ENCODE measurements at regions of chr20 and their contacts with region 1.

Region 1: GRCh38 chr20:18287915-18288748 is at the start of gene ZNF133:
- DNase-seq: peak; percentile 94 to 100 (median 96)
- ATAC-seq: peak; percentile 91
- H3K4me3 ChIP-seq: peak within 1 kb of the TSS; percentile 74 to 95
- H3K4me3 Mint-ChIP-seq: peak within 1 kb of the TSS; percentile 96
- H3K27ac ChIP-seq: peak within 1 kb of the TSS; percentile 94 to 96
- H3K27ac Mint-ChIP-seq: peak within 1 kb of the TSS; percentile 99
- H3K4me1 ChIP-seq: peaks cover 16% of the 10 kb centered on the region
- H3K4me1 Mint-ChIP-seq: peaks cover 37% of the 10 kb centered on the region
- H3K27me3 ChIP-seq: peaks cover 0 to 2% of the 10 kb centered on the region in 2 experiments
- H3K27me3 Mint-ChIP-seq: peaks cover 14% of the 10 kb centered on the region
- CTCF ChIP-seq: no peak
- total RNA-seq, gene ZNF133: 2.2 to 2.7 TPM

Region 2: GRCh38 chr20:16729565-16730456 is 1558.3 kb before region 1 on chr20 and contains the start of gene SNRPB2:
- CTCF ChIA-PET with region 1: no interaction called
- POLR2A ChIA-PET with region 1: interaction called, 3 read pairs
- intact Hi-C with region 1: loop called (anchors 2 kb)
- DNase-seq: peak; percentile 81 to 96 (median 91)
- ATAC-seq: peak; percentile 95
- H3K4me3 ChIP-seq: peak within 1 kb of the TSS; percentile 84 to 97
- H3K4me3 Mint-ChIP-seq: peak within 1 kb of the TSS; percentile 100
- H3K27ac ChIP-seq: peak within 1 kb of the TSS; percentile 93 to 94
- H3K27ac Mint-ChIP-seq: peak within 1 kb of the TSS; percentile 100
- H3K4me1 ChIP-seq: peaks cover 36% of the 10 kb centered on the region
- H3K4me1 Mint-ChIP-seq: peaks cover 52% of the 10 kb centered on the region
- H3K27me3 ChIP-seq: peaks cover 0 to 12% of the 10 kb centered on the region in 2 experiments
- H3K27me3 Mint-ChIP-seq: peaks cover 15% of the 10 kb centered on the region
- CTCF ChIP-seq: no peak
- total RNA-seq, gene SNRPB2: 49.0 to 50.4 TPM

Region 3: GRCh38 chr20:17682103-17682888 is 605.8 kb before region 1 on chr20 and contains the start of gene RRBP1:
- CTCF ChIA-PET with region 1: no interaction called
- POLR2A ChIA-PET with region 1: no interaction called
- intact Hi-C with region 1: loop called in 1 of 2 experiments (anchors 2 kb)
- DNase-seq: peak; percentile 94 to 98 (median 96)
- ATAC-seq: peak; percentile 91
- H3K4me3 ChIP-seq: peak within 1 kb of the TSS; percentile 50 to 71
- H3K4me3 Mint-ChIP-seq: peak within 1 kb of the TSS; percentile 88
- H3K27ac ChIP-seq: peak within 1 kb of the TSS; percentile 40 to 69
- H3K27ac Mint-ChIP-seq: peak within 1 kb of the TSS; percentile 86
- H3K4me1 ChIP-seq: peaks cover 18% of the 10 kb centered on the region
- H3K4me1 Mint-ChIP-seq: peaks cover 19% of the 10 kb centered on the region
- H3K27me3 ChIP-seq: no peaks in the 10 kb centered on the region
- H3K27me3 Mint-ChIP-seq: peaks cover 25% of the 10 kb centered on the region
- CTCF ChIP-seq: peak; percentile 83
- total RNA-seq, gene RRBP1: 26.4 to 26.5 TPM

Region 4: DNA sequence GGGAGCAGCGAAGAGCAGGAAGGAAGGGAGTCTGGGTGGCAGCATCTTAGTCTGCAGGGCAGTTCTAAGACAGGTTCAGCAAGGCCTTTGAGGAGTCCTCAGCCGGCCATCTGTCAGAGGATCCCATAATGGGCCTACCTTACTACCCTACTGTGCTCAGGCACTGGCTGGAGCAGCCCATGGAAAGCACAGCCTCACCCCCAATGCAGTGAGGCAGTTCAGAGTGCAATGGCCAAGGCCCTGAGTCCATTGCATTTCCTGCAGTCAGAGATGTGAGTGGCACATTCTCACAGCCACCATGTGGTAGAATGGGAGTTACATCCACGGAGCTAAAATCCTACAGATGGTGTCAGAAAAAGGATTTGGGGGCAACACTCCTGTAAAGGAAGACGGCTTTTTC is 211.0 kb before region 1 on chr20:
- CTCF ChIA-PET with region 1: no interaction called
- POLR2A ChIA-PET with region 1: no interaction called
- intact Hi-C with region 1: no loop called
- DNase-seq: no peak
- ATAC-seq: no peak
- H3K4me3 ChIP-seq: no peak overlapping the region
- H3K4me3 Mint-ChIP-seq: no peak overlapping the region
- H3K27ac ChIP-seq: no peak overlapping the region
- H3K27ac Mint-ChIP-seq: no peak overlapping the region
- H3K4me1 ChIP-seq: no peaks in the 10 kb centered on the region
- H3K4me1 Mint-ChIP-seq: no peaks in the 10 kb centered on the region
- H3K27me3 ChIP-seq: no peaks in the 10 kb centered on the region
- H3K27me3 Mint-ChIP-seq: peaks cover 22% of the 10 kb centered on the region
- CTCF ChIP-seq: no peak

Region 5: DNA sequence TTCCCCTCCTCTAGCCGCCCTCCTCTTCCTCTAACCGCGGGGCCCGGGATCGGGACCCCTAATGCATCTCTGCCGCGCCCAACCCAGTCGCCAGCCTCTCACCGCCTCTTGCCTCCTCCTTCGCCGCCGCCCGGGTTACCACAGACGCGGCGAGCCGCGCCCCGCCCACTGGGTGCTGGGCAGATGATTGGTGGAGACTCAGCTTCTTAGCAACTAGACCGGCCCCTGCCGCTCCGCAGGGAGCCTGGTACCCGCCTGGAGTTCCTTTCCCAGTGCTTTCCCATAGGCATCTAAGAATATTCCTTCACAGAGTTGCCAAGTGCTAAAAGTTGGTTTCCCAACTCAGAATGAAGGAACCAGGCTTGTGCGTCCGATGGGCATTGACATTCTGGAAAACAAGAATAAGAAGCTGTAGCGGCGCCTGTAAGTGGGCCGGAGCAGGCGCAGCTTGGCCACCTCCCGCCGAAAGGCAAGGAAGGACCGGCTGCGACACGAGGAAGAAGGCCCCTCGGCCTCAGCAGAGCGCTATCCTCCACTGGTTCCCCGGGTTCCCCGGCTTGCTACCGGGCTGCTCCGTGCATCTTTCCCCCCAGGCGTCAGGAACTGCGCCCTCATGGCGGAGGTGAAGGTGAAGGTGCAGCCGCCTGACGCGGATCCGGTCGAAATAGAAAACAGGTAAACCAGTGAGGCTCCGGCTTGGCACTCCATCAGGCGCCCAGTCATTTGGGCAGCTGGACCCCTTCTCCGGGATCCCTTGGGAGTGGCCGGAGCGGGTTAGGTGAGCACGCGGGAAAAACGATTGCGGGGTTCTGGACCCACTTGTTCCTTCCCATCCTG is 179.0 kb after region 1 on chr20 and contains the starts of genes DZANK1 and POLR3F:
- CTCF ChIA-PET with region 1: no interaction called
- POLR2A ChIA-PET with region 1: interaction called, 8 read pairs
- intact Hi-C with region 1: loop called in 1 of 2 experiments (anchors 1 kb)
- DNase-seq: peak; percentile 84 to 95 (median 93)
- ATAC-seq: peak; percentile 90
- H3K4me3 ChIP-seq: peak within 1 kb of the TSS; percentile 79 to 93
- H3K4me3 Mint-ChIP-seq: peak within 1 kb of the TSS; percentile 97
- H3K27ac ChIP-seq: peak within 1 kb of the TSS; percentile 73 to 92
- H3K27ac Mint-ChIP-seq: peak within 1 kb of the TSS; percentile 97
- H3K4me1 ChIP-seq: peaks cover 16% of the 10 kb centered on the region
- H3K4me1 Mint-ChIP-seq: peaks cover 24% of the 10 kb centered on the region
- H3K27me3 ChIP-seq: no peaks in the 10 kb centered on the region
- H3K27me3 Mint-ChIP-seq: no peaks in the 10 kb centered on the region
- CTCF ChIP-seq: no peak
- total RNA-seq, gene DZANK1: 2.0 to 2.3 TPM
- total RNA-seq, gene POLR3F: 11.5 TPM

Region 6: DNA sequence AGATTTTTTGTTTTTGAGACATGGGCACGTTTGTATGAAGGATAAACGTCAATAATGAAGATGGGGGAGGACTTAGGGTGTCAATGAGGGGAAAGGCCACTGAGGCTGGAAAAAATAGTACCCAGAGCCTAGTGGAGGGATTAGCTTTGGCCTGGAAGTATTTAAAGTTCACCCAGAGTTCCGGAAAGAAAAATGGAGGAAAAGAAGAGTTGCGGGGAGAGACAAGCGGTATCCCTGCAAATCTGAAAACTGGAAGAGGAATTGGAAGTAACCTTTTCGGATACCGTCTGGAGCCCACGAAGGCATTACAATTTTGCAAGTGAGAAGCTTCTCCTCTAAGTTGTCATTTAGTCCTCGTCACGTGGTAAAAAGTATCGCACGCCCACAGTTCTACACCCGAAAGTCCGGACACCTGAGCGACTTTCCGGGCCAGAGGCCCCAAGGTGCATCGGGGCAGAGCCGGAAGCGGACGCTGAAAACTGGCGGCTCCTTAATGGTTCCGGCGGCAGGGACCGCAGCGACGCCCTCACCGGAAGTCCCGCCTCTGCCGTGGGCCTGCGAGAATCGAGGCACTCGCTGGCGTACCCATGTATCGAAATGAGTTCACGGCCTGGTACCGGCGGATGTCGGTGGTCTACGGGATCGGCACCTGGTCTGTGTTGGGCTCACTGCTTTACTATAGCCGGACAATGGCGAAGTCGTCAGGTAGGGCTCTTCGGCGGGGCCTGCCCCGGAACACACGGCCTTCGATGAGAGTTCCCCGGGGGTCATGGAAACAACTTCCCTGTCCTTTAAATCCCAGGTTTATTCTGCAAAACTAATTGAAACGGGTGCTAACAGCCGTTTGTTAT is 279.0 kb after region 1 on chr20 and contains the start of gene SMIM26:
- CTCF ChIA-PET with region 1: no interaction called
- POLR2A ChIA-PET with region 1: no interaction called
- intact Hi-C with region 1: loop called in 1 of 2 experiments (anchors 1 kb)
- DNase-seq: peak; percentile 88 to 97 (median 95)
- ATAC-seq: peak; percentile 98
- H3K4me3 ChIP-seq: peak within 1 kb of the TSS; percentile 54 to 90
- H3K4me3 Mint-ChIP-seq: peak within 1 kb of the TSS; percentile 96
- H3K27ac ChIP-seq: peak within 1 kb of the TSS; percentile 79 to 94
- H3K27ac Mint-ChIP-seq: peak within 1 kb of the TSS; percentile 99
- H3K4me1 ChIP-seq: peaks cover 14% of the 10 kb centered on the region
- H3K4me1 Mint-ChIP-seq: peaks cover 22% of the 10 kb centered on the region
- H3K27me3 ChIP-seq: no peaks in the 10 kb centered on the region
- H3K27me3 Mint-ChIP-seq: no peaks in the 10 kb centered on the region
- CTCF ChIP-seq: no peak
- total RNA-seq, gene SMIM26: 63.9 to 64.8 TPM

Region 7: GRCh38 chr20:20017001-20017843 is 1729.1 kb after region 1 on chr20 and contains the start of gene NAA20:
- CTCF ChIA-PET with region 1: no interaction called
- POLR2A ChIA-PET with region 1: no interaction called
- intact Hi-C with region 1: loop called in 1 of 2 experiments (anchors 10 kb)
- DNase-seq: peak; percentile 75 to 94 (median 91)
- ATAC-seq: peak; percentile 94
- H3K4me3 ChIP-seq: peak within 1 kb of the TSS; percentile 77 to 89
- H3K4me3 Mint-ChIP-seq: peak within 1 kb of the TSS; percentile 91
- H3K27ac ChIP-seq: peak within 1 kb of the TSS; percentile 63 to 82
- H3K27ac Mint-ChIP-seq: peak within 1 kb of the TSS; percentile 91
- H3K4me1 ChIP-seq: peaks cover 44% of the 10 kb centered on the region
- H3K4me1 Mint-ChIP-seq: peaks cover 53% of the 10 kb centered on the region
- H3K27me3 ChIP-seq: no peaks in the 10 kb centered on the region
- H3K27me3 Mint-ChIP-seq: no peaks in the 10 kb centered on the region
- CTCF ChIP-seq: peak; percentile 58
- total RNA-seq, gene NAA20: 32.9 to 33.2 TPM